ENCODE measurements at regions of chr17 and their contacts with region 1.

Region 1: GRCh38 chr17:65742403-65743307 is 181.2 kb upstream of the AXIN2 start:
- DNase-seq: peak; percentile 95
- ATAC-seq: peak; percentile 99
- H3K4me3 ChIP-seq: peak overlapping the region; percentile 22
- H3K27ac ChIP-seq: peak overlapping the region; percentile 61
- H3K4me1 ChIP-seq: peaks cover 18% of the 10 kb centered on the region
- H3K27me3 ChIP-seq: no peaks in the 10 kb centered on the region
- CTCF ChIP-seq: no peak

Region 2: GRCh38 chr17:65698381-65699061 is 44.1 kb before region 1 on chr17:
- CTCF ChIA-PET with region 1: no interaction called
- POLR2A ChIA-PET with region 1: no interaction called
- intact Hi-C with region 1: loop called (anchors 1 kb)
- DNase-seq: no peak
- ATAC-seq: no peak
- H3K4me3 ChIP-seq: no peak overlapping the region
- H3K27ac ChIP-seq: no peak overlapping the region
- H3K4me1 ChIP-seq: peaks cover 30% of the 10 kb centered on the region
- H3K27me3 ChIP-seq: no peaks in the 10 kb centered on the region
- CTCF ChIP-seq: no peak

Region 3: DNA sequence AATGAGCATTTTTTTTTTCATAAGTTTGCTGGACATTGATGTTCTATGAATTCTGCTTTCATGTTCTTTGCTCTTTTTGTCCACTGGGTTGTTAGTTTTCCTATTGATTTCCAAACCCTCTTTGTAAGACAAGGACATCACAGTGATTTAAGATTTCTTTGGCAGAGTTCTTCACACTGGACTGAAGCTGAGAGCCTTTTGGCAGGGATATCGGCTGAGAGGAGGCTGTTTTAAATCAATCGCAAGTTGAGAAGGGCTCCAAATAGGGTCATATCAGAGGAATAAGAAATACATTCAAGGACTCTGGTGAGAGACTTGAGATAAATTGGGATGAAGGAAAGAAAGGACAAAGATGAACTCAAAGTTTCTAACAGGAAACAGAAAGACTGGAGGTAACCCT is 15.4 kb before region 1 on chr17:
- CTCF ChIA-PET with region 1: no interaction called
- POLR2A ChIA-PET with region 1: no interaction called
- intact Hi-C with region 1: loop called (anchors 2 kb)
- DNase-seq: no peak
- ATAC-seq: no peak
- H3K4me3 ChIP-seq: no peak overlapping the region
- H3K27ac ChIP-seq: no peak overlapping the region
- H3K4me1 ChIP-seq: peaks cover 15% of the 10 kb centered on the region
- H3K27me3 ChIP-seq: no peaks in the 10 kb centered on the region
- CTCF ChIP-seq: no peak

Region 4: GRCh38 chr17:65813306-65813705 is 70.7 kb after region 1 on chr17:
- CTCF ChIA-PET with region 1: no interaction called
- POLR2A ChIA-PET with region 1: no interaction called
- intact Hi-C with region 1: no loop called
- DNase-seq: no peak
- ATAC-seq: no peak
- H3K4me3 ChIP-seq: no peak overlapping the region
- H3K27ac ChIP-seq: no peak overlapping the region
- H3K4me1 ChIP-seq: no peaks in the 10 kb centered on the region
- H3K27me3 ChIP-seq: no peaks in the 10 kb centered on the region
- CTCF ChIP-seq: no peak

Measured in PC-3 (cell line).